Activated CD4-positive, alpha-beta T cell treated with anti-CD3 and anti-CD28 coated beads, Interleukin-2, amount 10 ng/mL, durations not matched to agents 7 days and 5 days (primary cell): ENCODE measurements at regions of chr5 and their contacts with region 1.

Region 1: GRCh38 chr5:151115274-151115905 is 34.6 kb upstream of the TNIP1 start:
- DNase-seq: peak; percentile 72
- H3K4me3 Mint-ChIP-seq: no peak overlapping the region
- H3K27ac Mint-ChIP-seq: no peak overlapping the region
- H3K4me1 Mint-ChIP-seq: peaks cover 2% of the 10 kb centered on the region
- H3K27me3 Mint-ChIP-seq: no peaks in the 10 kb centered on the region

Region 2: DNA sequence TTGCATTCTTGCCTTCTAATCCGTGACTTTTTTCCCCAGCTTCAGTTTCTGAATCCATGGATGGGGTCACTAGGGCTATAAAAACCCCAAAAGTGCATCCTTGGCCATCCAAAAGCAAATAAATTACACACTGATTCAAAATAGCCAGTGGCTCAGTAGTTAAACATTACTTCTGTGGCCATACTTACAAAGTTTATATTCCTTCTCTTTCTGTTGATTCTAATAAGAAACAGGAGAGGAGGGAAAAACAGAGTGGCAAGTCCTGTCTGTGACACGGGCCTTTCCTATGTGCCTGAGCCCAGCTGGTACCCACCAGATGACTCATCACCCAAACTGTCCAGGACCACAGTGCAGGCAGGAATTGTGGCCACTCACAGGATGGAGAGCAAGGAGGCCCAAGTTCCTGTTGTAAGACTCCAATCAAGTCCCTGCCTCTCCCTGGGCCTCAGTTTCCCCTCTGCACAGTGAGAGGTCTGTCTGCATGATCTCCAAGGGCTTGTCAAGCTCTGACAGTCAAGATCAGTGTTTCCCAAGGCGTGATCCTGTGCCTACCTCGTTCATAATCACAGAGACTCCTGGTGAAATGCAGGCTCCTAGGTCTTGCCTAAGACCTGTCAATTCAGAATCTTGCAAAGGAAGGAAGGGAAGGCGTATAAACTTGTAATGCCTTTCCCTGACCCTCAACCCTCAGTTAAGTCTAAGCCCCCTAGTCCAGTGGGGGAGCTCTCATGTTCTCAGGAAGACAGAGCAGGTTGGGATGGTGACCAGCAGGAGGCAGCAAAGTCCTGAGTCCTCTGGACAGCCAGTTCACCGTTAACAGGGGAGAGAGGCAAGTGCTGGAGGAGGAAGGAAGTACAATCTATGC is 64.1 kb before region 1 on chr5:
- CTCF ChIA-PET with region 1: interaction called, 77 read pairs
- POLR2A ChIA-PET with region 1: no interaction called
- DNase-seq: peak; percentile 72
- H3K4me3 Mint-ChIP-seq: no peak overlapping the region
- H3K27ac Mint-ChIP-seq: peak overlapping the region; percentile 43
- H3K4me1 Mint-ChIP-seq: peaks cover 4% of the 10 kb centered on the region
- H3K27me3 Mint-ChIP-seq: no peaks in the 10 kb centered on the region

Region 3: GRCh38 chr5:151058891-151059489 is 56.4 kb before region 1 on chr5:
- CTCF ChIA-PET with region 1: interaction called, 77 read pairs
- POLR2A ChIA-PET with region 1: no interaction called
- DNase-seq: no peak
- H3K4me3 Mint-ChIP-seq: peak overlapping the region; percentile 44
- H3K27ac Mint-ChIP-seq: peak overlapping the region; percentile 86
- H3K4me1 Mint-ChIP-seq: peaks cover 28% of the 10 kb centered on the region
- H3K27me3 Mint-ChIP-seq: no peaks in the 10 kb centered on the region

Region 4: DNA sequence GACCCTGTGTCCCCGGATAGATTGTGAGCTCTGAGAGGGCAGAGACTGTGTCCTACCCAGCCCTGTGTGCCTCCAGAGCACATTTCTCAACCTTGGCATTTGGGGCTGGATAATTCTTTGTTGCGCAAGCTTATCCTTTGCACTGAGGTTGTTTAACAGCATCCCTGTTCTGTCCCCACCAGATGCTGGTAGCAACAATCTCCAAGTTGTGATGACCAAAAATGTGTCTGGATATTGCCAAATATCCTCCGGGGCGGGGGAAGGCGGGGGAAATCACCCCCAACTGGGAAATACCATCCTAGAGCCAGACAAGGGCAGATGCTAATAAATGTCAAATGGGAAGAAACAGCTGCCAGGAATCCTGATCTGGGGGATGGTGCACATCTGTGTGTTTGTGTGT is 10.6 kb before region 1 on chr5:
- CTCF ChIA-PET with region 1: interaction called, 16 read pairs
- POLR2A ChIA-PET with region 1: no interaction called
- DNase-seq: no peak
- H3K4me3 Mint-ChIP-seq: no peak overlapping the region
- H3K27ac Mint-ChIP-seq: peak overlapping the region; percentile 3
- H3K4me1 Mint-ChIP-seq: peaks cover 6% of the 10 kb centered on the region
- H3K27me3 Mint-ChIP-seq: no peaks in the 10 kb centered on the region

Region 5: DNA sequence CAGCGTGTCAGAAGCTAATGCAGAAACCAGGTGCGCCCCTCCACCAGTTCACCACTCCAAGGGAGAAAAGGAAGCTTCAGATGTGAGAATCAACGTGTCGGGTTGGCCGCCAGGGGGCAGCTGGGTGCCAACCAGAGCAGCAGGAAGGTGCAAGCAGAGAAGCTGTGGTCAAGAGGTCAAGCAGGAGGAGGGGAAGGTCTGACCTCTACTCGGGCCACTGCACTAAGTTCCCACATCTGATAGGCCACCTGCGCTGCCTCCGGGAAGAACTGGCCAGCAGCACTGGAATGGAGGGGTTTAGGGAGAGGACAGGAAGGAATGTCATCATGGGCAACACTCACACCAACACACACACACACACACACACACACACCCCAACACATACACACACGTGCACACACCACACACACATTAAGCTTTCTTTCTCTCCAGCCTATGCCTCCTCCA is 10.8 kb after region 1 on chr5:
- CTCF ChIA-PET with region 1: interaction called, 63 read pairs
- POLR2A ChIA-PET with region 1: no interaction called
- DNase-seq: peak; percentile 70
- H3K4me3 Mint-ChIP-seq: no peak overlapping the region
- H3K27ac Mint-ChIP-seq: peak overlapping the region; percentile 79
- H3K4me1 Mint-ChIP-seq: peaks cover 42% of the 10 kb centered on the region
- H3K27me3 Mint-ChIP-seq: no peaks in the 10 kb centered on the region

Region 6: GRCh38 chr5:151134238-151134637 is 18.8 kb after region 1 on chr5:
- CTCF ChIA-PET with region 1: interaction called, 11 read pairs
- POLR2A ChIA-PET with region 1: no interaction called
- DNase-seq: no peak
- H3K4me3 Mint-ChIP-seq: no peak overlapping the region
- H3K27ac Mint-ChIP-seq: no peak overlapping the region
- H3K4me1 Mint-ChIP-seq: peaks cover 56% of the 10 kb centered on the region
- H3K27me3 Mint-ChIP-seq: no peaks in the 10 kb centered on the region

Region 7: GRCh38 chr5:151213800-151214613 is 98.6 kb after region 1 on chr5:
- CTCF ChIA-PET with region 1: no interaction called
- POLR2A ChIA-PET with region 1: no interaction called
- DNase-seq: peak; percentile 94
- H3K4me3 Mint-ChIP-seq: peak overlapping the region; percentile 71
- H3K27ac Mint-ChIP-seq: peak overlapping the region; percentile 97
- H3K4me1 Mint-ChIP-seq: peaks cover 85% of the 10 kb centered on the region
- H3K27me3 Mint-ChIP-seq: no peaks in the 10 kb centered on the region

Region 8: GRCh38 chr5:151284392-151284967 is 169.1 kb after region 1 on chr5:
- CTCF ChIA-PET with region 1: no interaction called
- POLR2A ChIA-PET with region 1: no interaction called
- DNase-seq: no peak
- H3K4me3 Mint-ChIP-seq: no peak overlapping the region
- H3K27ac Mint-ChIP-seq: no peak overlapping the region
- H3K4me1 Mint-ChIP-seq: no peaks in the 10 kb centered on the region
- H3K27me3 Mint-ChIP-seq: peaks cover 2% of the 10 kb centered on the region